K562 (cell line): ENCODE measurements at regions of chr5 and their contacts with region 1.

Region 1: GRCh38 chr5:113678924-113679575 is 165.6 kb downstream of the YTHDC2 start:
- DNase-seq: peak; percentile 59 to 66 (median 64)
- ATAC-seq: peak; percentile 95
- H3K4me3 ChIP-seq: no peak overlapping the region
- H3K27ac ChIP-seq: no peak overlapping the region
- H3K4me1 ChIP-seq: no peaks in the 10 kb centered on the region
- H3K27me3 ChIP-seq: no peaks in the 10 kb centered on the region
- CTCF ChIP-seq: peak; percentile 67 to 83 (median 68)
- EP300 ChIP-seq: no peak
- POLR2A ChIP-seq: no peak
- RAD21 ChIP-seq: peak; percentile 79 to 80

Region 2: GRCh38 chr5:113749334-113749733 is 70.3 kb after region 1 on chr5:
- CTCF ChIA-PET with region 1: no interaction called
- POLR2A ChIA-PET with region 1: no interaction called
- in situ Hi-C with region 1: no loop called
- intact Hi-C with region 1: no loop called
- DNase-seq: no peak
- ATAC-seq: no peak
- H3K4me3 ChIP-seq: no peak overlapping the region
- H3K27ac ChIP-seq: no peak overlapping the region
- H3K4me1 ChIP-seq: no peaks in the 10 kb centered on the region
- H3K27me3 ChIP-seq: no peaks in the 10 kb centered on the region
- CTCF ChIP-seq: no peak
- EP300 ChIP-seq: no peak
- POLR2A ChIP-seq: no peak
- RAD21 ChIP-seq: no peak

Region 3: DNA sequence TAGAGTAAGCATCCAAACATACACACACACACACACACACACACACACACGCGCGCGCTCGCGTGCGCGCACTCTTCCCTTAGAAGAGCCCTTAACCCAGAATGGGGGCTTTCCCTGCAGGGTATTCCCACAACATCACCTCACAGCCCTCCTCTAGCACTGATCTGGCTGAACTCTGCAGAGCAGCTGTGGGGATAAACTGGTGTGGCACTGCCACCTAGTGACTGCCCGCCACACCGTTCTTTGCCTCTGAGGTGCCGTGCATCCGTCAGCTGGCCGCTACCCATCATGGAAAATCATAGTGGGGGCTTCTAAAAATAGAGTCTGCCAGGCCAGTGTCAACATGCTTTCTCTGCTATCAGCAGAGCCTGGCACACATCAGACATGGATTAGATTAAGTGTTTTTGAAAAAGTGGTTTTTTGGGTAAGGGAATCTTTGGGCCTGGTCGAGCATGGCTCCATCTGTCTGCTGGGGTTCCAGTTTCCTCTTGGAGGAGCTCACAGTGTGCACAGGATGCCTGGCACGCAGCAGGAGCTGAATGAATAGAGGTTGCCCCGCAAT is 770.9 kb after region 1 on chr5:
- CTCF ChIA-PET with region 1: interaction called, 4 read pairs
- POLR2A ChIA-PET with region 1: no interaction called
- in situ Hi-C with region 1: no loop called
- intact Hi-C with region 1: loop called (anchors 10 kb)
- DNase-seq: peak; percentile 8 to 10 (median 10)
- ATAC-seq: peak; percentile 56; the same call in 2 of the 3 replicates
- H3K4me3 ChIP-seq: no peak overlapping the region
- H3K27ac ChIP-seq: no peak overlapping the region
- H3K4me1 ChIP-seq: no peaks in the 10 kb centered on the region
- H3K27me3 ChIP-seq: no peaks in the 10 kb centered on the region
- CTCF ChIP-seq: peak in 2 of 3 experiments; percentile 17 to 28; a peak in 2 of 6 replicates
- EP300 ChIP-seq: no peak
- POLR2A ChIP-seq: no peak
- RAD21 ChIP-seq: peak; percentile 32 to 51

Region 4: DNA sequence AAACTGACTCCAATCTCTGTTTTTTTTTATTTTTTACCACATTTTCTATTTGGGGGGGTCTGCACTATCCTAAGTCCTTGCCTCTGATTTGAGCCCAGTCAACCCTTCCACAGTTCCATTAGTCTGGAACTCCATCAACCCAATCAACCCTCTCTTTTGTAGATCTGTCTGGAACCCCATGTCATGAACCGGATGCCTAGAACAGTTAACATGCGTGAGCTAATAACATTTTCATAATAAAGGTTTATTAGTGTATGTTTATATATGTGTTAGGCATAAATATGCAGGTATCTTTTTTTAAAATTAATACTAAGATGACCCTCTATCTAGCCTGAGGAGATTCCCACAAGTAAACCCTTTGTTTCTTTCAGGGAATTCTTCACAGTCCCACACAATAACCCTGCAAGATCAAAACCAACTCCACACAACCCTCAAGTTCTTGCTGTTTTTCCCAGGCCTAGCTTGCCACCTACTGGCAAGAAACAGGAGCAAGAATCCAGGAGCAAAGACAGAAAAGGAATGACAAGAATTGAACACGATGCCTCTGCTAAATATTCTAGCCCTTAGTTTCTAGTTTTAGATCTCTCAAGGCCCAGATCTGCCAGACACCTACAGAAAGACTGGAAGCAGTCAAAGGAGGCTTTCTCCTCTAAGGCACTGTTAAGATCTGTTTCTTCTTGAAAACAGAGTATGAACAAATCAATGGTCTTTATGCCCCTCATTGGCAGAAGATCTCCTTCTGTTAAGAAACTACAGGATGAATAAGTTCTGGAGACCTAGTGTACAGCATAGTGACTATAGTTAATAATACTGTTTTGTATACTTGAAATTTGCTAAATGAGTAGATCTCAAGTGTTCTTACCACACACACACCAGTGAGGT is 1390.3 kb after region 1 on chr5:
- CTCF ChIA-PET with region 1: interaction called, 4 read pairs
- POLR2A ChIA-PET with region 1: interaction called, 3 read pairs
- in situ Hi-C with region 1: no loop called
- intact Hi-C with region 1: loop called (anchors 1 kb)
- DNase-seq: peak in 2 of 4 experiments; percentile 17 to 46
- ATAC-seq: peak; percentile 78
- H3K4me3 ChIP-seq: no peak overlapping the region
- H3K27ac ChIP-seq: no peak overlapping the region
- H3K4me1 ChIP-seq: no peaks in the 10 kb centered on the region
- H3K27me3 ChIP-seq: no peaks in the 10 kb centered on the region
- CTCF ChIP-seq: peak; percentile 53 to 64 (median 57); a peak in 4 of 6 replicates
- EP300 ChIP-seq: no peak
- POLR2A ChIP-seq: no peak
- RAD21 ChIP-seq: peak; percentile 49 to 73

Region 5: DNA sequence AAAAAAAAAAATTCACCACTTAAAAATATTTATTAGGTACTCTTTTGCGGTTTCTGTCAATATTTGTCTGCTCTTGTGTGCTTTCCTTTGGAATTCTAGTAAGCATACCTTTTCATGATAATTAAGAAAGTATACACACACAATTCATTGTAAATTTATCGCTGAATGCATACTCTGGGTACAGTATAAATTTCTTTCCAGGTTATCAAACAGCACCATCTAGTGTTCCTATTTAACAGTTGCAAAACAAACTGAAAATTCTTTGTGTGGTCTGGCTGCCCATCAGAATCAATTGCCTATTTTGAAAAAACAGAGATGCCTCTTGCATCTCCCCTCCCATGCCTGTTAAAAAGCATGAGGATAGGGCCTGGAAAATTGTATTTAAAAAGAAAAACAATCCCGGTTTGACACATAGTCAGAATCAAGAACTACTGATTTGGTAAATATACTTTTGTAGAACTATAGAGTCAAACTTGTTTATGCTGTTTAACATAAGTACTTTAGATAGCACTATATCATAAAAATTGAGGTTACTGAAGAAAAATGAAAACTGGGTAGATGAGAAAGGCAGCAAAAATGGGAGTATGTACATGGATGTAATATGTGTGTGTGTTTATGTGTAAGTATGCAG is 1567.4 kb after region 1 on chr5:
- CTCF ChIA-PET with region 1: no interaction called
- POLR2A ChIA-PET with region 1: no interaction called
- in situ Hi-C with region 1: loop called (anchors 5 kb)
- intact Hi-C with region 1: loop called (anchors 10 kb)
- DNase-seq: peak; percentile 20 to 44 (median 23)
- ATAC-seq: peak; percentile 81
- H3K4me3 ChIP-seq: no peak overlapping the region
- H3K27ac ChIP-seq: no peak overlapping the region
- H3K4me1 ChIP-seq: no peaks in the 10 kb centered on the region
- H3K27me3 ChIP-seq: no peaks in the 10 kb centered on the region
- CTCF ChIP-seq: peak; percentile 27 to 73 (median 51); a peak in 4 of 6 replicates
- EP300 ChIP-seq: no peak
- POLR2A ChIP-seq: no peak
- RAD21 ChIP-seq: peak; percentile 59 to 69

Region 6: DNA sequence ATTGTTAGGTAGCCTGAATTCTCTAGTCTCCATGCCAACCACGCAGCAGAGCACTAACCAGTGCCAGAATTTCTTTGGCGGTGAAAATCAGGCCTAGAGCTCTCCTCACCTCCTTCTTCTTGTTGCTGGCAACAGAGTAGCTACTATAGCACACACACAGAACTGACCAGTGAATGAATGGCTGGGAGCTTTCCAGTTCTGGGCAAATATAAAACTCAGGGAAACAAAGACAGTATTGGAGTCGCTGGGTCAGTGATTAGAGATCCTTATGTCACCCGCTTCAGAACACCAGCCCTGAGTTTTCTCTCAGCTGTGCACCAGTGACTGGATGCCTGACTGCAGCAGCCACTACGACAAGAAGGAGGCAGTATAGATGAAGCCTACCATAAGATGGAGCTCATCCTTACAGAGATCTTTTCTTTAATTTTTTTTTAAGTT is 1892.4 kb after region 1 on chr5:
- CTCF ChIA-PET with region 1: no interaction called
- POLR2A ChIA-PET with region 1: no interaction called
- in situ Hi-C with region 1: loop called (anchors 25 kb)
- intact Hi-C with region 1: loop called (anchors 5 kb)
- DNase-seq: no peak
- ATAC-seq: peak; percentile 65; the same call in 2 of the 3 replicates
- H3K4me3 ChIP-seq: no peak overlapping the region
- H3K27ac ChIP-seq: no peak overlapping the region
- H3K4me1 ChIP-seq: no peaks in the 10 kb centered on the region
- H3K27me3 ChIP-seq: peaks cover 0 to 2% of the 10 kb centered on the region in 2 experiments; a peak in 2 of 5 replicates
- CTCF ChIP-seq: peak in 2 of 3 experiments; percentile 2 to 10; a peak in 1 of 6 replicates
- EP300 ChIP-seq: no peak
- POLR2A ChIP-seq: no peak
- RAD21 ChIP-seq: no peak

Region 7: DNA sequence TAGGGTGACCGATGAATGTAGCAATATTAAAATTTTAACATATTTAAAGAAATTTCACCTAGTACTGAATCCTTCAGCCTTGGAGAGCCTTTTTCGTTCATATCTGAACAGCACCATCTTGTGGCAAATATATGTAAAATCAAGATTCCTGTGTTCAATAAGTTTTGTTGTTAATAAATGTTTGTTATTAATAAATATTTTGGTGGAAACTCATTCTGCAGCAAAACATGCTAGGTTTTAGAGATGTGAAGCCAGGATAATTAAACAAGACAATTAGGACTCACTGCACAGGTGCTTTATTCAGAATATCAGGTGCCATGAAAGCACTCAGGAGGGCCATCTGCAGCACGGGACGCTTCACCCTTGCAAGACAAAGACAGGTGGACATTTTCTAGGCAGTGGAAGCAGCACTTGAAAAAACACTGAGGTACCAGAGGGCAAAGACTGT is 1907.6 kb after region 1 on chr5:
- CTCF ChIA-PET with region 1: no interaction called
- POLR2A ChIA-PET with region 1: no interaction called
- in situ Hi-C with region 1: loop called (anchors 25 kb)
- intact Hi-C with region 1: no loop called
- DNase-seq: peak; percentile 14 to 25 (median 16)
- ATAC-seq: peak; percentile 53; the same call in 1 of the 3 replicates
- H3K4me3 ChIP-seq: no peak overlapping the region
- H3K27ac ChIP-seq: no peak overlapping the region
- H3K4me1 ChIP-seq: no peaks in the 10 kb centered on the region
- H3K27me3 ChIP-seq: no peaks in the 10 kb centered on the region
- CTCF ChIP-seq: peak in 2 of 3 experiments; percentile 43 to 60; a peak in 4 of 6 replicates
- EP300 ChIP-seq: no peak
- POLR2A ChIP-seq: no peak
- RAD21 ChIP-seq: peak; percentile 70 to 72